Activated naive CD4-positive, alpha-beta T cell treated with anti-CD3 and anti-CD28 coated beads for 36 hours (primary cell): ENCODE measurements at regions of chr21 and their contacts with region 1.

Region 1: GRCh38 chr21:25507522-25507921 is 99.8 kb downstream of the MRPL39 start:
- DNase-seq: peak; percentile 55
- H3K4me3 Mint-ChIP-seq: no peak overlapping the region
- H3K27ac Mint-ChIP-seq: peak overlapping the region; percentile 70
- H3K4me1 Mint-ChIP-seq: peaks cover 75% of the 10 kb centered on the region
- H3K27me3 Mint-ChIP-seq: no peaks in the 10 kb centered on the region

Region 2: DNA sequence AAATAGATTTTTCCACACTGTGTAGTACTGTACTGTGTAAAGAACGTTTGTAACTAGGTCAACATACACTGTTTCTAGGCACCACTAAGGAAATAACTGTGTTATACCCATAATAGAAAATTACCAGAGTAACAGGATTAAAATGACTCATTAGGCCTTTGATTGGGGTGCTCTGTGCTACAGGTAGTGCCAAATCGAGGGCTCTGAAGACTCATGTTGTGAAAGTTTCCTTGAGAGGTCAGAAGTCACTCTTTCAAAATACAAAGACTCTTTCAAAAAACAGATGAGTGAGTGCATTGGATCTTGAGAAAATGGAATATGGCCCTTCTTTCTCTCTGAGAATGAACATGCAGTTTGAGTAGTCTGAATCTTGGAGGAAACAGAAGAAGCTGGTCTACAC is 43.2 kb before region 1 on chr21:
- CTCF ChIA-PET with region 1: interaction called, 5 read pairs
- intact Hi-C with region 1: loop called (anchors 1 kb)
- DNase-seq: peak; percentile 51
- H3K4me3 Mint-ChIP-seq: peak overlapping the region; percentile 11
- H3K27ac Mint-ChIP-seq: peak overlapping the region; percentile 90
- H3K4me1 Mint-ChIP-seq: peaks cover 69% of the 10 kb centered on the region
- H3K27me3 Mint-ChIP-seq: no peaks in the 10 kb centered on the region

Region 3: GRCh38 chr21:25561668-25562641 is 54.4 kb after region 1 on chr21:
- CTCF ChIA-PET with region 1: interaction called, 8 read pairs
- intact Hi-C with region 1: loop called (anchors 1 kb)
- DNase-seq: peak; percentile 81
- H3K4me3 Mint-ChIP-seq: peak overlapping the region; percentile 91
- H3K27ac Mint-ChIP-seq: peak overlapping the region; percentile 96
- H3K4me1 Mint-ChIP-seq: peaks cover 45% of the 10 kb centered on the region
- H3K27me3 Mint-ChIP-seq: no peaks in the 10 kb centered on the region